Esophagus muscularis mucosa (tissue), 4 donors: ENCODE measurements at regions of chr1 and their contacts with region 1.

Region 1: DNA sequence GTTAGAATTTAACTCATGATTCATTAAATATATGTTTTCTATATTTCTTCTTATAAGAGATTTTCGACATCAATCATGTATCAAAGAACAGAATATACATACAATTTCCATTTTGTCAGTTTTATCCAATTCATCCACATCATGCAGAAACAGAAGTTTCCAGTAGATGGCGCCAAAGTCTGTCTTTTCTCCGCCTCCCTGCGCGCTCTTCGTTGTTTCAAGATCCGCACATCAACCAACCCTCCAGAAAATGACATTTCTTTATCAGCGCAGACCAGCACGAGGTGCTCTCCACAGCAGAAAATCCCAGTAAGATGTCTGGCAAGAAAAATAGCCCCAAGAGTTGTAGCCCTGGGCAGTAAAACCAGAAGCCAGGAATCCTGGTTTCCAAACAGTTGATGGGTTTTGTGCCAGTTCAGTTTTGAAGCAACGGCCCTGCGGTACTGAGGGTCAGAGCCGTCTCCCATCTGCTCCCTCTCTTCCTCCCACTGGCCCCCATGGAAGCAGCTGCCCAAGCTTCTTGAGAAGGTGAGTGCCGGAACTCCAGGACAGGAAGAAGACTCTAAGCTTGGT is 38.6 kb upstream of the GPR137B start:
- DNase-seq: no peak
- H3K4me3 ChIP-seq: peak overlapping the region in 1 of 4 donors; percentile 21
- H3K27ac ChIP-seq: no peak overlapping the region
- H3K4me1 ChIP-seq: peaks cover 0 to 8% (median 3%) of the 10 kb centered on the region in 4 donors
- H3K27me3 ChIP-seq: peaks cover 0 to 14% (median 0%) of the 10 kb centered on the region in 4 donors
- CTCF ChIP-seq: peak; percentile 76 to 88 (median 86)
- EP300 ChIP-seq: no peak
- POLR2A ChIP-seq: no peak

Region 2: GRCh38 chr1:236489710-236490377 is 386.1 kb after region 1 on chr1:
- intact Hi-C with region 1: loop called (anchors 2 kb)
- DNase-seq: no peak
- H3K4me3 ChIP-seq: no peak overlapping the region
- H3K27ac ChIP-seq: no peak overlapping the region
- H3K4me1 ChIP-seq: peaks cover 0 to 4% (median 3%) of the 10 kb centered on the region in 4 donors
- H3K27me3 ChIP-seq: no peaks in the 10 kb centered on the region
- CTCF ChIP-seq: peak; percentile 53 to 61 (median 60)
- EP300 ChIP-seq: no peak
- POLR2A ChIP-seq: no peak

Region 3: DNA sequence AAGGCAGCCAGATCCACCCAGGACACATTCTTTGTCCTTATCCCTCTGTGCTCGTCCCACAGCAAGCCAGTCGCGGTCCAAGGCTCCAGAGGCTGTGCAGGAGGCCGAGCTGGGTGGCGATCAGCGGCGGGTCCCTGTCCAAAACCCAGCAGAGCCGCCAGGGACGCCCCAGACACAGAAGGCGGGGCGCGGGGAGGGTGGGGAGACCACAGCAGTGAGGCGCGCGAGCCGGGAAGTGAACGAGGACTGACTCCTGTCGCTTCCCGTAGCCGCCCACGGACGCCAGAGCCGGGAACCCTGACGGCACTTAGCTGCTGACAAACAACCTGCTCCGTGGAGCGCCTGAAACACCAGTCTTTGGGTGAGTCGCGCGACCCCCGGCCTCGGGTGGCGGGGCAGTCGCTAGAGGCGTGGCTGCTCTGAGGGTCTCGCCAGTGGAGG is 420.0 kb after region 1 on chr1 and contains the start of gene LGALS8:
- intact Hi-C with region 1: loop called (anchors 10 kb)
- DNase-seq: peak; percentile 97
- H3K4me3 ChIP-seq: peak within 1 kb of the TSS; percentile 79 to 96 (median 88)
- H3K27ac ChIP-seq: peak within 1 kb of the TSS; percentile 84 to 91 (median 88)
- H3K4me1 ChIP-seq: peaks cover 10 to 19% (median 15%) of the 10 kb centered on the region in 4 donors
- H3K27me3 ChIP-seq: no peaks in the 10 kb centered on the region
- CTCF ChIP-seq: no peak
- EP300 ChIP-seq: peak; percentile 67
- POLR2A ChIP-seq: peak; percentile 45
- total RNA-seq, gene LGALS8: 32.8 to 83.3 (median 51.9) TPM